Endothelial cell of umbilical vein (primary cell): ENCODE measurements at regions of chr11 and their contacts with region 1.

Region 1: GRCh38 chr11:118051611-118052461 is 25.0 kb upstream of the TMPRSS4 start:
- DNase-seq: no peak
- H3K4me3 ChIP-seq: no peak overlapping the region
- H3K27ac ChIP-seq: no peak overlapping the region
- H3K4me1 ChIP-seq: no peaks in the 10 kb centered on the region
- H3K27me3 ChIP-seq: peaks cover 5 to 7% of the 10 kb centered on the region in 2 experiments
- CTCF ChIP-seq: no peak
- POLR2A ChIP-seq: no peak

Region 2: DNA sequence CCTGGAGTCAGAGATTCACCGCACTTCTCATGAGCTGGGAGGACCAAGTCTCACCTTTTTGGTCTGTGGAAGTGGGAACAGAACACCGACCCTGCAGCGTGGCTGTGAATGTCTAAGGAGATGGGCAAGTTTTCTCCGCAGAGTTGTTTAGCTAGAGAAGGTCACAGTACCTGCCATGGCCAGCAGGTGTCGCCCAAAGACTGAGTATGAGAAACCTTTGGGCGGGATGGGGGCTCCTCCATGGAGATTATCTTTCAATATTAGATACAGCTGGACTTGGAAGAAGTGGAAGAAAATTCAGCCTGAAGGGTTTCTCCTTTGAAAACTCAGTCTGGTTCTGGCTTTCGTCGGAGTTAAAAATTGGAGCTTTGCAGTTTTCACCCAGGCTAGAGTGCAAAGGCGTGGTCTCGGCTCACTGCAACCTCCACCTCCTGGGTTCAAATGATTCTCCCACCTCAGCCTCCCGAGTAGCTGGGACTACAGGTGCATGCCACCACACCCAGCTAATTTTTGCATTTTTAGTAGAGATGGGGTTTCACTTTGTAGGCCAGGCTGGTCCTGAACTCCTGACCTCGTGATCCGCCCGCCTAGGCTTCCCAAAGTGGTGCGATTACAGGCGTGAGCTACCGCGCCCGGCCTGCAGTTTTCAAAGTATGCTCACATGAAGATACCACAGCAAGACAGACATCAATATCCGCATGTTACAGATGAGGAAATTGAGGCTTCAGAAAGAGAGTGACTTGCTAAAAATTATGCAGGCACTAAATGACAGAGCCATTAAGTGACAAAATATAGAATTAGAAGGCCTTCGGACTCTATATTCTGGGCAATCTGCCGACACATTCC is 244.1 kb before region 1 on chr11:
- CTCF ChIA-PET with region 1: interaction called, 213 read pairs
- POLR2A ChIA-PET with region 1: no interaction called
- dilution Hi-C with region 1: no loop called
- intact Hi-C with region 1: loop called (anchors 1 kb)
- DNase-seq: peak; percentile 47
- H3K4me3 ChIP-seq: no peak overlapping the region
- H3K27ac ChIP-seq: no peak overlapping the region
- H3K4me1 ChIP-seq: no peaks in the 10 kb centered on the region
- H3K27me3 ChIP-seq: peaks cover 1 to 5% of the 10 kb centered on the region in 2 experiments
- CTCF ChIP-seq: peak; percentile 81 to 92
- POLR2A ChIP-seq: no peak

Region 3: GRCh38 chr11:117843666-117844484 is 208.0 kb before region 1 on chr11:
- CTCF ChIA-PET with region 1: interaction called, 46 read pairs
- POLR2A ChIA-PET with region 1: no interaction called
- dilution Hi-C with region 1: no loop called
- intact Hi-C with region 1: loop called (anchors 1 kb)
- DNase-seq: peak; percentile 69
- H3K4me3 ChIP-seq: no peak overlapping the region
- H3K27ac ChIP-seq: no peak overlapping the region
- H3K4me1 ChIP-seq: no peaks in the 10 kb centered on the region
- H3K27me3 ChIP-seq: peaks cover 0 to 2% of the 10 kb centered on the region in 2 experiments
- CTCF ChIP-seq: peak; percentile 92 to 95
- POLR2A ChIP-seq: no peak

Region 4: GRCh38 chr11:117861151-117862018 is 190.5 kb before region 1 on chr11:
- CTCF ChIA-PET with region 1: interaction called, 11 read pairs
- POLR2A ChIA-PET with region 1: no interaction called
- dilution Hi-C with region 1: no loop called
- intact Hi-C with region 1: no loop called
- DNase-seq: peak; percentile 15
- H3K4me3 ChIP-seq: no peak overlapping the region
- H3K27ac ChIP-seq: no peak overlapping the region
- H3K4me1 ChIP-seq: peaks cover 6% of the 10 kb centered on the region
- H3K27me3 ChIP-seq: no peaks in the 10 kb centered on the region
- CTCF ChIP-seq: no peak
- POLR2A ChIP-seq: no peak

Region 5: GRCh38 chr11:118071416-118072030 is 19.7 kb after region 1 on chr11:
- CTCF ChIA-PET with region 1: interaction called, 11 read pairs
- POLR2A ChIA-PET with region 1: no interaction called
- dilution Hi-C with region 1: no loop called
- intact Hi-C with region 1: no loop called
- DNase-seq: no peak
- H3K4me3 ChIP-seq: no peak overlapping the region
- H3K27ac ChIP-seq: no peak overlapping the region
- H3K4me1 ChIP-seq: no peaks in the 10 kb centered on the region
- H3K27me3 ChIP-seq: peaks cover 0 to 1% of the 10 kb centered on the region in 2 experiments
- CTCF ChIP-seq: no peak
- POLR2A ChIP-seq: no peak